CD8-positive, alpha-beta T cell (primary cell): ENCODE measurements at regions of chr10 and their contacts with region 1.

Region 1: GRCh38 chr10:3805791-3806461 is 20.9 kb upstream of the KLF6 start:
- DNase-seq: peak in 6 of 9 experiments; percentile 51 to 76 (median 66)
- ATAC-seq: peak; percentile 7
- H3K4me3 ChIP-seq: no peak overlapping the region
- H3K4me3 Mint-ChIP-seq: peak overlapping the region; percentile 36
- H3K27ac ChIP-seq: peak overlapping the region; percentile 85 to 98
- H3K27ac Mint-ChIP-seq: peak overlapping the region; percentile 99
- H3K4me1 ChIP-seq: peaks cover 80% of the 10 kb centered on the region
- H3K4me1 Mint-ChIP-seq: peaks cover 71% of the 10 kb centered on the region
- H3K27me3 ChIP-seq: peaks cover 0 to 4% of the 10 kb centered on the region in 2 experiments
- H3K27me3 Mint-ChIP-seq: no peaks in the 10 kb centered on the region
- CTCF ChIP-seq: no peak

Region 2: DNA sequence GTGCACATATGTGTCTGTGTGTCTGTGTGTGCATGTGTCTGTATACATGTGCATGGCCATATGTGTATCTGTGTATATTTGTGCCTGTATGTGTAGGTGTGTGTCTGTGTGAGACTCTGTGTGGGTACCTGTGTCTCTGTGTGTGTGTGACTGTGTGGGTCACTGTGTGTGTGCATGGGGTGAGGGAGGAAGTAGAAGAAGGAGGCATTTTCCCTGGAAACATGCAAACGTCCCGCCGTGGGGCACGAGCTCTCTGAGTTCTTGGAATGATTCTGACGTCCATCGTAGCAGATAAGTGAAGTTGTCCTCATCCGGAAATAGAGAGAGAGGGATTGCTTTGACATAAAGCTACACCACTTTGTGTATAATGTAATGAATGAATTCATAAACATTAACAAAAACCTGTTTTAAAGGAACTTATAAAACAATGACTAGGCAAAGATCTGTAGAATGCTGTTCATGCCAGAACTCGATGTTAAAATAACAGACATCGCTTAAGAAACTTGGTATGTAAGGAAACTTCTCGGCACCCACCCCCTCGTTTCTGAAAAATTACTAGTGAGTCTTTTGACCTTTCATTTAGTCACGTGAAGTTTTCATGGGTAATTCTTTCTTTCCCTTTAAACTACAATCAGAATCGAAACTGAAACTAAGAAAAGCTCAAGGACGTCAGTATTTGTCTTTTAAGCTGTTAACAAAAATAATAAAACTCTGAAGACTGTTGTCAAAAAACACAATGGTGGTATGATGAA is 22.7 kb after region 1 on chr10:
- CTCF ChIA-PET with region 1: interaction called, 8 read pairs
- POLR2A ChIA-PET with region 1: interaction called, 9 read pairs
- intact Hi-C with region 1: loop called in 1 of 2 experiments (anchors 1 kb)
- DNase-seq: peak in 2 of 9 experiments; percentile 62 to 78
- ATAC-seq: peak; percentile 46
- H3K4me3 ChIP-seq: peak overlapping the region; percentile 28 to 53
- H3K4me3 Mint-ChIP-seq: peak overlapping the region; percentile 81
- H3K27ac ChIP-seq: peak overlapping the region; percentile 50 to 88
- H3K27ac Mint-ChIP-seq: peak overlapping the region; percentile 92
- H3K4me1 ChIP-seq: peaks cover 12% of the 10 kb centered on the region
- H3K4me1 Mint-ChIP-seq: peaks cover 22% of the 10 kb centered on the region
- H3K27me3 ChIP-seq: no peaks in the 10 kb centered on the region
- H3K27me3 Mint-ChIP-seq: no peaks in the 10 kb centered on the region
- CTCF ChIP-seq: no peak

Region 3: GRCh38 chr10:3852147-3852904 is 46.4 kb after region 1 on chr10:
- CTCF ChIA-PET with region 1: no interaction called
- POLR2A ChIA-PET with region 1: no interaction called
- intact Hi-C with region 1: loop called (anchors 1 to 5 kb)
- DNase-seq: peak in 7 of 9 experiments; percentile 21 to 85 (median 56)
- ATAC-seq: peak; percentile 86
- H3K4me3 ChIP-seq: no peak overlapping the region
- H3K4me3 Mint-ChIP-seq: no peak overlapping the region
- H3K27ac ChIP-seq: peak overlapping the region in 1 of 2 experiments; percentile 60
- H3K27ac Mint-ChIP-seq: peak overlapping the region; percentile 80
- H3K4me1 ChIP-seq: no peaks in the 10 kb centered on the region
- H3K4me1 Mint-ChIP-seq: peaks cover 18% of the 10 kb centered on the region
- H3K27me3 ChIP-seq: no peaks in the 10 kb centered on the region
- H3K27me3 Mint-ChIP-seq: no peaks in the 10 kb centered on the region
- CTCF ChIP-seq: no peak

Region 4: DNA sequence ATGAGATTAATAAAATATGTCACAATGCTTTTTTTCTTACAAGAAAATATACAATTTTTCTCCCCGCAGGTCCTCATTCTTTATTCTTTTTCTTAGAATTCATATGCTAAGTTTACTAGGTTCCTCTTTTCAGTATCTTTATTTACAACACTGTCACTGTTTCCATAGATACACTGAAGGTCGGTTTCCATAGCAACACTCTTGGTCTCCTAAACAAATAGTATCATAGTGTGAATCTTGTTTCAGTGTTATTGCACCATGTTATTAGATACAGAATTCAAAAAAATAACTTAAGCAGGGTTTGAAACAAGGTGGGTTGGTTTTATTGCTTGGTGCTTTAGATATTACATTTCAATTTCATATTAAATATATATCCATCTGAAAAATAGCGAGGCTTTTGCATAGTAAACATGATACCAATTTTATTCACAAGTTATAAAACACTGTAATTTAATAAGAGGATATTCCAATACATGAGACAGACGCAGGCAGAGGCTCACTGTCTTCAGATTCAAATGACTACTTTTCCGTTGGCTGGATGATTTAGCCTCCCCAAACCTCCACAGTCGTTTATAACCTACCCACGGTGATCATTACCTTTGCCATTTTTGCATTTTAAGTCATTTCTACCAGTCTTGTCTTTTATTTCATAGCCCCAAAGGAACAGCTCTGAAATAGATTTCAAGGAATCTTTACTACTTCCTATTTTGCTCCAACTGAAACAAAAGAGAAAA is 68.0 kb after region 1 on chr10:
- CTCF ChIA-PET with region 1: no interaction called
- POLR2A ChIA-PET with region 1: no interaction called
- intact Hi-C with region 1: loop called (anchors 1 kb)
- DNase-seq: peak in 4 of 9 experiments; percentile 7 to 91 (median 50)
- ATAC-seq: peak; percentile 55
- H3K4me3 ChIP-seq: no peak overlapping the region
- H3K4me3 Mint-ChIP-seq: no peak overlapping the region
- H3K27ac ChIP-seq: peak overlapping the region; percentile 26 to 95
- H3K27ac Mint-ChIP-seq: peak overlapping the region; percentile 88
- H3K4me1 ChIP-seq: peaks cover 25% of the 10 kb centered on the region
- H3K4me1 Mint-ChIP-seq: peaks cover 43% of the 10 kb centered on the region
- H3K27me3 ChIP-seq: no peaks in the 10 kb centered on the region
- H3K27me3 Mint-ChIP-seq: no peaks in the 10 kb centered on the region
- CTCF ChIP-seq: no peak

Region 5: DNA sequence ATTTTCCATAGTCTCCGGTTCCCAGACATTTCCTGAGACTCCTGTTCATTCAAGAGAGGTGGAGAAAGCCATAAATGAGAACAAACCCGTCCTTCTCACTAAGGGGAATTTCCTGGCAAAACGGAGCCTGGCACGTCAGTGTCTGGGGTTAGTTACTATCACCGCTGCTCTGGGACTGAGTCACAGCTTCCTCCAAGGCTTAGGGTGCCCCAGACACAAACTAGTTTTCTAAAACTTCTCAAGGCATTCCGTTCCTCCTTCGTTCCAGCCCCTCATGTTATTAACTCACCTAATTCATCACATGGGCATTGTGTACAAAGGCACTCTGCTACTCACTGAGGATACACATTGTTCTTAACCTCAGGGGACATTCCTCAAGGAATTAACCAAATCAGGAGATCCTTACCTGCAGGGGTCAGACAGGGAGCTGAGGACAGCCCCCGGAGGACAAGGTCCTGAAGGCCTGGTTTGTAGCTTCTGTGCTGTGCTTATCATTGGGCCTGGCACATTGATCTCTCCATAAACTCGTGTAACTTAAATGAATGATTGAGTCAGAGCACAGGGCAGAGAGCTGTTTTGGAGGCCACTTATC is 82.1 kb after region 1 on chr10:
- CTCF ChIA-PET with region 1: no interaction called
- POLR2A ChIA-PET with region 1: interaction called, 4 read pairs
- intact Hi-C with region 1: loop called in 1 of 2 experiments (anchors 5 kb)
- DNase-seq: peak; percentile 26 to 93 (median 57)
- ATAC-seq: peak; percentile 69
- H3K4me3 ChIP-seq: peak overlapping the region in 1 of 2 experiments; percentile 21
- H3K4me3 Mint-ChIP-seq: peak overlapping the region; percentile 22
- H3K27ac ChIP-seq: peak overlapping the region in 1 of 2 experiments; percentile 72
- H3K27ac Mint-ChIP-seq: peak overlapping the region; percentile 81
- H3K4me1 ChIP-seq: peaks cover 12% of the 10 kb centered on the region
- H3K4me1 Mint-ChIP-seq: peaks cover 29% of the 10 kb centered on the region
- H3K27me3 ChIP-seq: no peaks in the 10 kb centered on the region
- H3K27me3 Mint-ChIP-seq: no peaks in the 10 kb centered on the region
- CTCF ChIP-seq: no peak

Region 6: DNA sequence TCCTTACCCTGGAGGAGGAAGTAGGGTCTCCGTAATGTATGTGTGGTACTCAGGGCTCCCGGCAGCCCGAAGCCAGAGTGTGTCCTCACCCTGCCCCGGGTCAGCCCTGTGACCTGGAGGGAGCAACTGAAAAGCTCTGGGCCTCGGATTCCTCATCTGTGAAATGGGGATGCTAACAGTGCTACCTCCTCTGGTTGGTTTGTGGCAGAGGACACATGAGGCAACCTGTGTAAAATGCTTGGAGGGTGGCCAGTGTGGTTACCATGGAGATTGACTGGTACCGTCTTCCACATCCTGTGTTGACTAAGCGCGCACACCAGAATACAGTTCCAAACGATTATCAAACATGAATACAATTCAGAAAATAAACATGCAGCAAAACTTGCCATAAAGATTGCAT is 142.9 kb after region 1 on chr10:
- CTCF ChIA-PET with region 1: no interaction called
- POLR2A ChIA-PET with region 1: interaction called, 3 read pairs
- intact Hi-C with region 1: loop called (anchors 1 to 5 kb)
- DNase-seq: peak; percentile 55 to 93 (median 83)
- ATAC-seq: peak; percentile 82
- H3K4me3 ChIP-seq: no peak overlapping the region
- H3K4me3 Mint-ChIP-seq: peak overlapping the region; percentile 49
- H3K27ac ChIP-seq: peak overlapping the region in 1 of 2 experiments; percentile 72
- H3K27ac Mint-ChIP-seq: peak overlapping the region; percentile 86
- H3K4me1 ChIP-seq: peaks cover 52% of the 10 kb centered on the region
- H3K4me1 Mint-ChIP-seq: peaks cover 55% of the 10 kb centered on the region
- H3K27me3 ChIP-seq: no peaks in the 10 kb centered on the region
- H3K27me3 Mint-ChIP-seq: no peaks in the 10 kb centered on the region
- CTCF ChIP-seq: no peak

Region 7: GRCh38 chr10:3972460-3973301 is 166.8 kb after region 1 on chr10:
- CTCF ChIA-PET with region 1: no interaction called
- POLR2A ChIA-PET with region 1: no interaction called
- intact Hi-C with region 1: no loop called
- DNase-seq: peak in 4 of 9 experiments; percentile 17 to 62 (median 45)
- ATAC-seq: peak; percentile 66
- H3K4me3 ChIP-seq: no peak overlapping the region
- H3K4me3 Mint-ChIP-seq: peak overlapping the region; percentile 79
- H3K27ac ChIP-seq: peak overlapping the region; percentile 44 to 71
- H3K27ac Mint-ChIP-seq: peak overlapping the region; percentile 95
- H3K4me1 ChIP-seq: peaks cover 64% of the 10 kb centered on the region
- H3K4me1 Mint-ChIP-seq: peaks cover 50% of the 10 kb centered on the region
- H3K27me3 ChIP-seq: no peaks in the 10 kb centered on the region
- H3K27me3 Mint-ChIP-seq: no peaks in the 10 kb centered on the region
- CTCF ChIP-seq: no peak